ENCODE measurements at regions of chr5 and their contacts with region 1.

Region 1: GRCh38 chr5:174418928-174419796 is 305.2 kb upstream of the MSX2 start:
- DNase-seq: peak; percentile 73
- CTCF ChIP-seq: peak; percentile 96

Region 2: DNA sequence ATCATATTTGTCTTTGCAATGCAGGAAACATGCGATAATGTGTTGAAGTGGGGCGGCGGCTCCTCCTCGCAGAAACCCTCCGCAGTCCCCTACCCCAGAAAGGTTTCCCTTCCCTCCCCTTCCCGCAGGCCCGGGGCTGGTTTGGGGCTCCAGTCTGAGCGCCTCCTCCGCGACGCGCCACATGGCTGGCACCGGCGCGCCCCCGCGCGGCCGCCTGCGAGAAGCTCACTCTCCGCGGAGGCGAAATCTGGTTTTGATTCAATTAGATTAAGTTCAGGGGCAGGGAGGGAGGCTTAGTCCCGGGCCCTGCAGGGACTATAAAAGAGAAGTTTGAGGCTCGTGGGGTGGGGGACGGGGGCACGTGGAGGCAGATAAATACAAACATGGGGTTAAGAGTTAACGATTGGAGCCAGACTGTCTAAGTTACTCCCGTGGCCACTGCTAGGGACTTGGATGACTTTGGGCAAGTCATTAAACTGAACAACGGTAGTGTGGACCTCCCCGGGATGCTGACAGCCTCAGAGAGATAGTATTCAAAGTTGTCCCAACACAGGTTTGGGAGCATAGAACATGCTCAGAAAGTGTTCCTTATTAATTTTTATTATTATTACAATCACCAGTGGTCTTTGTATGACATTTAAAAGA is 374.6 kb after region 1 on chr5:
- in situ Hi-C with region 1: loop called (anchors 25 kb)
- DNase-seq: peak; percentile 82
- CTCF ChIP-seq: peak; percentile 94